Heart left ventricle (tissue), 16 donors: ENCODE measurements at regions of chr7 and their contacts with region 1.

Region 1: DNA sequence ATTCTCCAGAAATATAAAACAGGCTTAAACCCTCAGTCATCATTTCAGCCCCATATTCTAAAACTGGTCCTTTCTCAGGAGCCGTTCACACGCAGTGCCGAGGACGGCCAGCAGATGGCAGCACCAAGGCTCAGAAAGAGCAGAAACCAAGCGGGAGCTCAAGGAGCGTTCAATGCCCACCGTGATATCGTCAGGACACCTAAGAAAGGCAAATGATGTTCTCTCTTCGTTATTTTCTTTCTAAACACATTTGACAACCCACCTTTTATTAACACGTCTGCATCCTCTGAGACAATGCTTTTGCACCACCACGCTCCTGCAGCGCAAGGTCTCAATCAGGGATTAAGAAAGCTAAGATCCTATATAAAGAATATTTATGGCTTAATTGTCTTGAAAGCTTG is 45.7 kb upstream of the RBM33 start:
- DNase-seq: peak; percentile 61 to 86 (median 75)
- ATAC-seq: peak in 3 of 4 donors; percentile 76 to 79 (median 77)
- H3K4me3 ChIP-seq: no peak overlapping the region
- H3K27ac ChIP-seq: no peak overlapping the region
- H3K4me1 ChIP-seq: peaks cover 0 to 10% (median 0%) of the 10 kb centered on the region in 12 donors
- H3K27me3 ChIP-seq: peaks cover 0 to 34% (median 4%) of the 10 kb centered on the region in 9 donors
- CTCF ChIP-seq: peak; percentile 93 to 99 (median 96)
- POLR2A ChIP-seq: no peak

Region 2: DNA sequence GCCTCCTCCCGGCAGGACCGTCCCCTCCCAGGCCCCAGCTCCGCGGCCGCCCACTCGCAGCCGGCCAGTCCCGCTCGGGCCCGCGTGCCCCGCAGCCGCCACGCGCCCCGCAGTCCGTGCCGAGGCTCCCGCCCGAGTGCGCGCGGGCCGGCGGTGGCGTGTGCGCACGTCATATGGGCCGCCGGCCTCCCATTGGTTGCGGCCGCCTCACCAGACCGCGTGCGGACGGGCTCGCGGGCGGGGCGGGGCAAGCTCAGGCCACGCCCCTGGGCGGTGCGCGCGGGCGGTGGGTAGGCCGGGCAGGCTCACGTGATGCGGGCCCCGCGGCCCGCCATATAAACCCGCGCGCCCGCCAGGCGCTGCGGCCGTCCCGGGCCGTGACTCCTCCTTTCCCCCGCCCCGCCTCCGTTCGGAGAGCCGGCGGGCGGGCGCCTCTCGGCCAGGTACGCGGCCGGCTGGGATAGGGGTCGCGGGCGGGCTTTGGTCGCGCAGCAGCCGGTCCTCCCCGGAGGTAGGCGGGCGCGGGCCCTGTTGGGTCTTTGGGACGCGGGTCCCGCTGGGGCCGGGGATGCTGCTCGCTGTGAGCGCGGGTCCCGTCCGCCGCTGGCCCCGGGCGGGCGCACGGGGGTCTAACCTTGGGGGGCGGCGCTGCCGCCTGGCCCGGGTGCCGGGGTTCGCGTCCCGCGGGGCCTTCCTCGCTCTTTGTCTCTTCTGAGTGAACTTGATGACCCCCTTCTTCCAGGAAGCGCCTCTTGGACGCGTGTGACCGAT is 301.1 kb before region 1 on chr7 and contains the start of gene INSIG1:
- intact Hi-C with region 1: no loop called
- DNase-seq: peak; percentile 91 to 96 (median 94)
- ATAC-seq: peak; percentile 89 to 94 (median 92)
- H3K4me3 ChIP-seq: peak within 1 kb of the TSS; percentile 46 to 97 (median 90)
- H3K27ac ChIP-seq: peak within 1 kb of the TSS; percentile 60 to 98 (median 92)
- H3K4me1 ChIP-seq: peaks cover 0 to 50% (median 25%) of the 10 kb centered on the region in 12 donors
- H3K27me3 ChIP-seq: no peaks in the 10 kb centered on the region
- CTCF ChIP-seq: no peak
- POLR2A ChIP-seq: peak; percentile 74 to 98
- total RNA-seq, gene INSIG1: 7.9 to 24.5 (median 13.3) TPM

Region 3: DNA sequence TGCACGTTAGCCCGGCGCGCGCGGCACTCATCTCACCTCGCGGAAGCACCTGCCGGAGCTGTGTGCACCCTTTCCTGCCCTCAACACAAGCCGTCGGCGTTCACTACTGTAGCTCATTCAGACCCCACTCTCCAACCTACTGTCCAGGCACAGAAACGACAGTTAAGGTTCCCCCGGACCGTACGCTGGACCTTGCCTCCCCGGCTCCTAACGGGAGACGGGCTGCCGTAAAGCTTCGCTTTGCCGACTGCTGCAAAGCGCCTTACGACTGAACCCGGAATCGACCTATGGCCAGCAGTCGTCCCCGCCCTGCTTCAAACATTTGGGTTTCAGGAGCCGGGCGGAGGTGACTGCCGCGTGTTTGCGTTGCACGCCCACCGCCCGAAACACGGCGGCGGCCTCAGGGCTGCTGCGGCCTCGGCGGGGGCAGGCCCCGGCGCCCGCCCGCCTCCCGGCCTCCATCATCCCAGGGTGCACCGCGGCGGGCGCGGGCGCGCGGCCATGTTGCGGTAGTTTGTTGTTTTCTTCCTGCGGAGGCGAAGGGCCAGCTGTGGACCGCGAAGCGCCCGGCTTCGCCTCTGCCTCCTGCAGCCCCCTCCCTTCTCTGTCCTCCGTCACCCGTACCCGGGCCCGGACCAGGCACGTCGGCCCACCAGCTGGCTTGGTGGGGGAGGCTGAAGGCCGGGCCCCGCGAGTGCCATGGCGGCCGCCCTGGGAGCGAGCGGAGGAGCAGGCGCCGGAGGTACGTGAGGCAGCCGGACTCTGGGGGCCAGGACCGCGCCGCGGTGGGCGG is 45.6 kb after region 1 on chr7 and contains the start of gene RBM33:
- intact Hi-C with region 1: no loop called
- DNase-seq: peak; percentile 75 to 89 (median 83)
- ATAC-seq: peak; percentile 65 to 96 (median 92)
- H3K4me3 ChIP-seq: peak within 1 kb of the TSS; percentile 74 to 100 (median 96)
- H3K27ac ChIP-seq: peak within 1 kb of the TSS; percentile 72 to 98 (median 95)
- H3K4me1 ChIP-seq: peaks cover 0 to 34% (median 21%) of the 10 kb centered on the region in 12 donors
- H3K27me3 ChIP-seq: no peaks in the 10 kb centered on the region
- CTCF ChIP-seq: no peak
- POLR2A ChIP-seq: peak in 1 of 2 donors; percentile 47
- total RNA-seq, gene RBM33: 13.1 to 40.8 (median 35.8) TPM

Region 4: GRCh38 chr7:155738652-155739537 is 140.1 kb after region 1 on chr7:
- intact Hi-C with region 1: loop called (anchors 1 to 5 kb)
- DNase-seq: peak; percentile 57 to 81 (median 71)
- ATAC-seq: peak in 3 of 4 donors; percentile 81 to 85 (median 82)
- H3K4me3 ChIP-seq: no peak overlapping the region
- H3K27ac ChIP-seq: no peak overlapping the region
- H3K4me1 ChIP-seq: peaks cover 0 to 8% (median 4%) of the 10 kb centered on the region in 12 donors
- H3K27me3 ChIP-seq: no peaks in the 10 kb centered on the region
- CTCF ChIP-seq: peak; percentile 31 to 75 (median 62)
- POLR2A ChIP-seq: no peak

Region 5: GRCh38 chr7:155763691-155764437 is 165.1 kb after region 1 on chr7:
- intact Hi-C with region 1: loop called in 9 of 10 experiments (anchors 1 to 5 kb)
- DNase-seq: no peak
- ATAC-seq: peak in 3 of 4 donors; percentile 62 to 76 (median 63)
- H3K4me3 ChIP-seq: peak overlapping the region in 1 of 12 donors; percentile 28
- H3K27ac ChIP-seq: peak overlapping the region in 11 of 12 donors; percentile 3 to 85 (median 48)
- H3K4me1 ChIP-seq: peaks cover 4 to 59% (median 22%) of the 10 kb centered on the region in 12 donors
- H3K27me3 ChIP-seq: no peaks in the 10 kb centered on the region
- CTCF ChIP-seq: no peak
- POLR2A ChIP-seq: no peak

Region 6: GRCh38 chr7:155769701-155770100 is 170.9 kb after region 1 on chr7:
- intact Hi-C with region 1: loop called (anchors 1 to 5 kb)
- DNase-seq: no peak
- ATAC-seq: peak in 3 of 4 donors; percentile 7 to 61 (median 60)
- H3K4me3 ChIP-seq: no peak overlapping the region
- H3K27ac ChIP-seq: peak overlapping the region in 4 of 12 donors; percentile 18 to 66 (median 40)
- H3K4me1 ChIP-seq: peaks cover 0 to 17% (median under 1%) of the 10 kb centered on the region in 12 donors
- H3K27me3 ChIP-seq: no peaks in the 10 kb centered on the region
- CTCF ChIP-seq: no peak
- POLR2A ChIP-seq: no peak